GM10248 (cell line): ENCODE measurements at regions of chr12 and their contacts with region 1.

Region 1: DNA sequence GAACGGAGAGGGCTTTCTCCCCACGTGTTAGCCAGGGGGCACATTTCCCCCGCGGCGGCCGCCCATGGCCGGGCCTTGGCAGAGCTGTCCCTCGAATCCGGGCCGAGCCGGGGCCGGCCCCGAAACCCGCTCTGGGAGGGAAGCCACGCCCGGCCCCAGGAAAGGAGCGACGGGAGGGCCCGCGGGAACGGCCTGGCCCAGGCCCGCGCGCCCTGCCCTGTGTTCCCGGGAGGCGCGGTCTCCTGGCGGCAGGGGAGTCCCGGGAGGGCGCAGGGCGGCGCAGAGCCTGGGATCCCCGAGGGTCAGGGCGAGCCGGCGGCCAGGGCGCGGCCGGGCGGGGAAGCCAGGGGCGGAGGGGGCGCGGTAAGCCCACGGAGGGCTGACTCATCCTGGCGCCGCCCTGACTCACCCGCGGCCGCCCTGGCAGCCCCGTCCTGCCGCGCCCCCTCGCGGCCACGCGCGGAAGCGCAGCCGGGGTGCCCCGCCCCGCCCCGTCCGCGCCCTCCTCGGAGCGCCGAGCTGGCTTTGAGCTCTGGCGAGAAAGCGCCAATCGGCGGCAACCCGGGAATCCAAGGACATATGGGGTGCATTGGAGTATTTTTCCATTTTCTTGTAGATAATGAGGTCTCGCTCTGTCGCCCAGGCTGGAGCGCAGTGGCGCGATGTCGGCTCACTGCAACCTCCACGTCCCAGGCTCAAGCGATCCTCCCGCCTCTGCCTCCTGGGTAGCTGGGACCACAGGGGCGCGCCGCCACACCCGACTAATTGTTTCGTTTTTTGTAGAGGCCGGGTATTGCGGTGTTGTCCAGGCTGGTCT is 31.8 kb upstream of the PLEKHG6 start:
- DNase-seq: peak; percentile 91
- CTCF ChIP-seq: peak; percentile 88

Region 2: DNA sequence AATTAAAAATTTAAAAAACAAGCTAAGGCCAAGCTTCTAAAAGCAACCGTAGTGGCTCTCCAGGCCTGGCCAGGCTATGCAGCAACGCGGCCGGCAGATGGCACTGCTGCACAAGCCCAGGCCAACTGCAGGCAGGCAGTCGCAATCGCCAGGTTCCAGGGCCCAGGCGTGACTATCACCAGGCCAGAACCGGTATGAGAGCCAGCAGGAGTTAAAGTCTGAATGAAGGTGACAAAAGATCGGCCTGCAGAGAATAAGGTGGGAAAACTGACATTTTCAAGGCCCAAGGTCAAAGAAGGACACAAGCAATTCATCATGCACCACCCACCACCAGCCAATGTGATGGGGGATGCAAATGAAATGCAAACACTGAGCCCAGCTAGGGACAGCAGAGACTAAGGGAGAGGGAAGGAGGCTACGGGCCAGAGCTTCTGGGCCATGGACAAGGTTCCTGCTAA is 290.0 kb before region 1 on chr12:
- CTCF ChIA-PET with region 1: interaction called, 16 read pairs
- POLR2A ChIA-PET with region 1: no interaction called
- DNase-seq: peak; percentile 82
- CTCF ChIP-seq: peak; percentile 98

Region 3: DNA sequence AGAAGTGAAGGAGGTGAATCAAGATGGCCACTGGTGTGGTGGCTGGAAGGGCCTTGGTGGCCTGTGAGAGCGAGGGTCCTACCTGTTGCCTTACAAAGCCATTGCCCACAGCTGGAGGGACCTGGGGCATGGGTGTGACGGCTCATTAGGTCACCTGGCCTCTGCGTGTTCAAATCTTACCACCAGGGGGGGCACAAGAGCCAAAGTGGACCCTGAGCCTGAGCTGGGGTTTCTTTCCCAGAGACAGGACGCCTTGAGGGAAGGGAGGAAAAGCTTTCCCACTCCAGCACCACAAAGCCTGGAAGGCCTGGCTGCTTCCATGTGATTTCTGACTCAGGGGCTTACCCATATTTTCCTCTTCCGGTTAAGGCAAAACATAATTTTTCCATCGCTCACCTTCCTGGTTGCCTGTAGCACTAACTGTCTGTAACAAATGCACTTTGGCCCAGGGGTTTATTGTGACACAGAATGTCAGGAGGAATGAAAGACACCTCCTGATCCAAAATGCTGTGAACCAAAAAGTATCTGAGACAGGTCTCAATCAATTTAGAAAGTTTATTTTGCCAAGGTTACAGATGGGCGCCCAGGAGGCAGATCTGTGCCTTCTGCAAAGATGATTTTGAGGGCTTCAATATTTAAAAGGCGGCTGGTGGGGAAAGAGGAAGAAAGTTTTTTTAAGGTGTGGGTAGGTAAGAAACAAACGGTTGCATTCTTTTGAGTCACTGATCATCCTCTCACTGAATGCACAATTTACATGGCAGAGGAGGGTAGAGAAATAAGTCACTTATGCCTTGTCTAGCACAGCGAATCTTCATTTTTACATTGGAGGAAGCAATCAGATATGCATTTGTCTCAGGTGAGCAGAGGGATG is 82.7 kb before region 1 on chr12:
- CTCF ChIA-PET with region 1: interaction called, 126 read pairs
- POLR2A ChIA-PET with region 1: no interaction called
- DNase-seq: peak; percentile 90
- CTCF ChIP-seq: peak; percentile 82

Region 4: DNA sequence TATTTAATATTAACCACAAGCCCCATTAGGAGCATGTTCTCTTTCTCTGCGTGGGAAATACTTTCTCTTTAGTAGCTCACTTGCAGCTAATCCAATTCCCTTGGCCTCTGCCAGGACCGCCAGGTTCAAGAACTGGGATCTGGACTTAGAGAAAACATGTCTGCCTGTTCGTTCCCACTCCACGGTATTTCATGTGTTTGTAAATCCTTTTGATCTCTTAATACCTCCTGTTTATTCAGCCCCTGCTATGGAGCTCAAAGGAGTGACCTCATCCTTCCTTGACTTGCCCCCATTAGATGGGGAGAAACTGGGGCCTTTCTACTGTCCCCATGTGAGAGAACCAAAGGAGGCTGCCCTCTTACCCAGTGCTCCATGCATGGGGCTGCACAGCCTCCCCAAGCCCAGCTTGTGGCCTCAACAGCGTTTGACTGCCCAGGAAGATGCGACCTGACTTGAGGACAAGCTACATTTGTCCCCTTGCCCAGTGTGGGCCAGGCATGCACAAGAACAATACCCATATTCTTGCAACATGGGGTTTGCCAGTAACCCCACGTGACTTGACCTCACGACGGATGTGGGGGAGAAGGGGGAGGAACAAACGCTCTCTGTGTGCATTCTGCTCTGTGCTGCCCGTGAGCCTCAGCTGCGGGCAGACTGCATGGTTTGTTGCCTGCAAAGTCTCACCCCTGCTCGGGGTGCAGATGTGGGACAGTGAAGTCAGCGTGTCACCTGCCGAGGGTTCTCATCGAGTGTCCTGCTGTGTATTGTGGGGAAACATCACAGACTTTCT is 48.1 kb before region 1 on chr12:
- CTCF ChIA-PET with region 1: interaction called, 10 read pairs
- POLR2A ChIA-PET with region 1: no interaction called
- DNase-seq: peak; percentile 39
- CTCF ChIP-seq: no peak

Region 5: GRCh38 chr12:6295094-6295811 is 16.6 kb after region 1 on chr12:
- CTCF ChIA-PET with region 1: interaction called, 14 read pairs
- POLR2A ChIA-PET with region 1: no interaction called
- DNase-seq: no peak
- CTCF ChIP-seq: no peak

Region 6: GRCh38 chr12:6443361-6443983 is 164.8 kb after region 1 on chr12:
- CTCF ChIA-PET with region 1: no interaction called
- POLR2A ChIA-PET with region 1: no interaction called
- DNase-seq: peak; percentile 39
- CTCF ChIP-seq: no peak